Panc1 (cell line): ENCODE measurements at regions of chr15 and their contacts with region 1.

Region 1: GRCh38 chr15:74158855-74159650 is 14.5 kb upstream of the ISLR start:
- DNase-seq: no peak
- ATAC-seq: no peak
- H3K4me3 ChIP-seq: no peak overlapping the region
- H3K27ac ChIP-seq: no peak overlapping the region
- H3K4me1 ChIP-seq: no peaks in the 10 kb centered on the region
- H3K27me3 ChIP-seq: peaks cover 2% of the 10 kb centered on the region; the same call in 1 of the 2 replicates
- CTCF ChIP-seq: no peak

Region 2: DNA sequence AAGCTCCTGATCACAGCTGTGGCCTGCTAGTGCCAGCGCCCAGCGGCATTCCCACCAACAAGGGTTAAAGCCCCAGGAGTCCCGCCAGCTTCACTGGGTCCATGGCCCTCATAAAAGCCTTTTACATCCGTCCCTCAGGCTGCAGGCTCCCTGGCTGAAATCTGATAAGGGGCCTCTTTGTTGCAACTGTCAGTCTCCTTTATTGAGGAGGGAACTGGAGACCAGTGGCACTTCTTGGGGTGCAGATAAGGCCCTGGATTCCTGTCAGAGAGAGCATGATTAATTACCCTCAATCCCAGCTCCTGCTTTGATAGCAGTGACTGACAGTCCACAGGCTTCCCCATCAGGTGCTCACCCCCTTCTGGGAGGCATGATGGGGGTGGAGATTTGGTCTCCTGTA is 425.7 kb after region 1 on chr15:
- CTCF ChIA-PET with region 1: no interaction called
- POLR2A ChIA-PET with region 1: interaction called, 18 read pairs
- in situ Hi-C with region 1: no loop called
- intact Hi-C with region 1: no loop called
- DNase-seq: no peak
- ATAC-seq: no peak
- H3K4me3 ChIP-seq: no peak overlapping the region
- H3K27ac ChIP-seq: no peak overlapping the region
- H3K4me1 ChIP-seq: no peaks in the 10 kb centered on the region; the same call in 1 of the 2 replicates
- H3K27me3 ChIP-seq: no peaks in the 10 kb centered on the region
- CTCF ChIP-seq: no peak